T-cell (primary cell): ENCODE measurements at regions of chr2 and their contacts with region 1.

Region 1: DNA sequence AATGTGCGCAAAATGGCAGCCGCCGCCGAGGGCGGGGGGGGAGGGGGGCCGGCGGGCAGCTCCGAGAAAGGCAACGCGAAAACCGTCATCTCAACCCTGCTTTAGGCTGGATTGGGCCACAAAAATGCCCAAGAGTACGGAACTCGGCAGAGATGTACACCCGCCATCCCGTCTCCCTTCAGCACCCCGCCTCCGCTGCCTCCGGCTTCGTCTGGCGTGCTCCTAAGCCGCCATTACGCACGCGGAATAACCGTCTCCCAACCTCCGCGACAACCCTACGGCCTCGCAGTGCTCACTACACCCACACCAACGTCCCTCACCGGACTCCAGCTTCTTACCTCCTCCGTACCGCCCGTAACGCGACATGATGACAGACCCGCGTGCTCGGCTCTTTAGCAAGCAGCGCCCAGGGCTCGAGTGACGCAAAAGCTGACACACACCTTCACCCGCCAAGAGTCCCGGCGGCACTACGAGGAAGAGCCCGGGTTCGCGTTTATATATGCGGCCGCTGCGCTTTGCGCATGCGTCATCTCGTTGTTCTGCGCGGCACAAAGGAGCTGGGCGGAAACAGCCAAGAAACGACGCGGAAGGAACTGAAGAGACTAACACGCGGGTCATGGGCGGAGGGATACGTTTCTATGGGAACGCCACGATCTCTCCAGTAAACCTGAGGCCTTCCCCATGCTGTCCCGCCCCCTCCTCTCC is at the start of gene SRSF7:
- DNase-seq: peak; percentile 94 to 99 (median 97)
- ATAC-seq: peak; percentile 78 to 87 (median 82)
- H3K4me3 ChIP-seq: peak within 1 kb of the TSS; percentile 89 to 95
- H3K4me3 Mint-ChIP-seq: peak within 1 kb of the TSS; percentile 99 to 100 (median 100)
- H3K27ac ChIP-seq: peak within 1 kb of the TSS; percentile 96
- H3K27ac Mint-ChIP-seq: peak within 1 kb of the TSS; percentile 99 to 100
- H3K4me1 ChIP-seq: peaks cover 36 to 46% of the 10 kb centered on the region in 2 experiments
- H3K4me1 Mint-ChIP-seq: peaks cover 52 to 66% (median 62%) of the 10 kb centered on the region in 3 donors
- H3K27me3 ChIP-seq: no peaks in the 10 kb centered on the region
- H3K27me3 Mint-ChIP-seq: peaks cover 0 to 3% of the 10 kb centered on the region in 2 donors
- total RNA-seq, gene SRSF7: 252 to 649 (median 265) TPM

Region 2: GRCh38 chr2:38602732-38603401 is 148.2 kb before region 1 on chr2 and contains the start of gene HNRNPLL:
- CTCF ChIA-PET with region 1: interaction called in 1 of 2 experiments, 4 read pairs
- POLR2A ChIA-PET with region 1: interaction called, 4 to 36 read pairs
- DNase-seq: peak; percentile 81 to 94 (median 89)
- ATAC-seq: peak; percentile 85 to 89 (median 88)
- H3K4me3 ChIP-seq: peak within 1 kb of the TSS; percentile 85 to 86
- H3K4me3 Mint-ChIP-seq: peak within 1 kb of the TSS; percentile 88 to 94 (median 94)
- H3K27ac ChIP-seq: peak within 1 kb of the TSS; percentile 79
- H3K27ac Mint-ChIP-seq: peak within 1 kb of the TSS; percentile 90 to 92
- H3K4me1 ChIP-seq: peaks cover 19 to 22% of the 10 kb centered on the region in 2 experiments
- H3K4me1 Mint-ChIP-seq: peaks cover 45 to 53% (median 49%) of the 10 kb centered on the region in 3 donors
- H3K27me3 ChIP-seq: no peaks in the 10 kb centered on the region
- H3K27me3 Mint-ChIP-seq: no peaks in the 10 kb centered on the region
- total RNA-seq, gene HNRNPLL: 28.1 to 69.0 (median 35.2) TPM

Region 3: GRCh38 chr2:38682008-38682575 is 69.0 kb before region 1 on chr2:
- CTCF ChIA-PET with region 1: no interaction called
- POLR2A ChIA-PET with region 1: interaction called, 6 to 11 read pairs
- DNase-seq: peak in 5 of 35 experiments; percentile 16 to 71 (median 21)
- ATAC-seq: peak; percentile 77 to 86 (median 84)
- H3K4me3 ChIP-seq: peak overlapping the region in 1 of 2 donors; percentile 25
- H3K4me3 Mint-ChIP-seq: peak overlapping the region; percentile 60 to 67 (median 61)
- H3K27ac ChIP-seq: peak overlapping the region; percentile 94
- H3K27ac Mint-ChIP-seq: peak overlapping the region; percentile 89 to 95
- H3K4me1 ChIP-seq: peaks cover 0 to 37% of the 10 kb centered on the region in 2 experiments
- H3K4me1 Mint-ChIP-seq: peaks cover 34 to 64% (median 40%) of the 10 kb centered on the region in 3 donors
- H3K27me3 ChIP-seq: no peaks in the 10 kb centered on the region
- H3K27me3 Mint-ChIP-seq: no peaks in the 10 kb centered on the region

Region 4: DNA sequence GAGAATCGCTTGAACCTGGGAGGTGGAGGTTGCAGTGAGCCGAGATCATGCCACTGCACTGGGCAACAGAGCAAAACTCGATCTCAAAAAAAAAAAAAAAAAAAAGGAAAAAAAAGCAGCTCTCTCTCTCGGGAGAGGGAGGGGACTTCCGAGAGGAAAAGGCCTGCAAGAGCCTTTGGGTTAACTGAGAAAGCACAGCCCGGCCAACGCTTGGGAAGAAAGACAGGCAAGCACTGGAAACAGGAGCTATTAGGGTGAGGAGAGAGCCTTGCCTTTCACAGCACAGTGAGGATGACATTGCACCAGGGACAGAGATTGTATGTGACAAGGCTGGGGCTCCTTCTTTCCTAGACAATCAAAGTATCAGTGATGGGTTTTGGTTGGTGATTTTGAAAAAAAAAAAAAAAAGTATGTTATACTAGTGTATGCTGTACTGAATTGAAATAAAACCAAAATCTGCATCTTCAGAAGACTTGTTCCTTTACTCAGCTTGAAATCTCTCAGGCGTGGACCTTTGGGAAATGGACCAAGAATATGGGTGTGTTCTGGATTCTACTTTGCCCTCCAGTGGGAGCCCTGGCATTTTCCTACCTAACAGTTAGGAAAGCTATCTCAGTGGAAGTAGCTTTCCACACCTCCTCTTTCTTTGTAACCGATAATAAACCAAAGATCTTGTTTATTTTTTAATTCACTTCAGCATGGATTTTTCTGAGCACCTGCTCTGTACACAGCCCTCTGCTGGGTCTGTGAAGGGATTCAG is 16.6 kb before region 1 on chr2:
- CTCF ChIA-PET with region 1: interaction called in 1 of 2 experiments, 6 read pairs
- POLR2A ChIA-PET with region 1: interaction called, 6 to 22 read pairs
- DNase-seq: no peak
- ATAC-seq: peak in 2 of 4 experiments; percentile 5 to 30
- H3K4me3 ChIP-seq: no peak overlapping the region
- H3K4me3 Mint-ChIP-seq: no peak overlapping the region
- H3K27ac ChIP-seq: no peak overlapping the region
- H3K27ac Mint-ChIP-seq: peak overlapping the region; percentile 55
- H3K4me1 ChIP-seq: no peaks in the 10 kb centered on the region
- H3K4me1 Mint-ChIP-seq: peaks cover 5 to 14% (median 14%) of the 10 kb centered on the region in 3 donors
- H3K27me3 ChIP-seq: peaks cover 0 to 3% of the 10 kb centered on the region in 2 experiments
- H3K27me3 Mint-ChIP-seq: no peaks in the 10 kb centered on the region

Region 5: DNA sequence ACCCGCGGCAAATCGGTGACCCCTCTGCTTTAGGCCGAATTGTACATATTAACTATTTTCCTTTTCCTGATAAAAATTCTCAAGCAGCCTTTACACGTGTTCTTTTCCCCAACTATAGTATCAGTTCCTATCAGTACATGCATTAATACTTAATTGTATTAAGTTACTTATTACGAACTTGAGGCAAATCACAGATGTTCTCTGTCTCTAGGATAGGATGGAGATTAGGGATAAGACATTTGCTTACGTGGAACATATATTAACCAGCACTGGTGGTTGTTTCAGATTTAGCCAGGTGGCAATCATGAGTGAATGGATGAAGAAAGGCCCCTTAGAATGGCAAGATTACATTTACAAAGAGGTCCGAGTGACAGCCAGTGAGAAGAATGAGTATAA is 27.6 kb after region 1 on chr2:
- CTCF ChIA-PET with region 1: interaction called in 1 of 2 experiments, 3 read pairs
- POLR2A ChIA-PET with region 1: interaction called, 13 to 41 read pairs
- DNase-seq: no peak
- ATAC-seq: no peak
- H3K4me3 ChIP-seq: peak overlapping the region; percentile 62 to 83
- H3K4me3 Mint-ChIP-seq: peak overlapping the region; percentile 96 to 100 (median 97)
- H3K27ac ChIP-seq: peak overlapping the region; percentile 72
- H3K27ac Mint-ChIP-seq: peak overlapping the region; percentile 93 to 97
- H3K4me1 ChIP-seq: peaks cover 8 to 18% of the 10 kb centered on the region in 2 experiments
- H3K4me1 Mint-ChIP-seq: peaks cover 12 to 17% (median 13%) of the 10 kb centered on the region in 3 donors
- H3K27me3 ChIP-seq: no peaks in the 10 kb centered on the region
- H3K27me3 Mint-ChIP-seq: peaks cover 9 to 15% of the 10 kb centered on the region in 2 donors

Region 6: DNA sequence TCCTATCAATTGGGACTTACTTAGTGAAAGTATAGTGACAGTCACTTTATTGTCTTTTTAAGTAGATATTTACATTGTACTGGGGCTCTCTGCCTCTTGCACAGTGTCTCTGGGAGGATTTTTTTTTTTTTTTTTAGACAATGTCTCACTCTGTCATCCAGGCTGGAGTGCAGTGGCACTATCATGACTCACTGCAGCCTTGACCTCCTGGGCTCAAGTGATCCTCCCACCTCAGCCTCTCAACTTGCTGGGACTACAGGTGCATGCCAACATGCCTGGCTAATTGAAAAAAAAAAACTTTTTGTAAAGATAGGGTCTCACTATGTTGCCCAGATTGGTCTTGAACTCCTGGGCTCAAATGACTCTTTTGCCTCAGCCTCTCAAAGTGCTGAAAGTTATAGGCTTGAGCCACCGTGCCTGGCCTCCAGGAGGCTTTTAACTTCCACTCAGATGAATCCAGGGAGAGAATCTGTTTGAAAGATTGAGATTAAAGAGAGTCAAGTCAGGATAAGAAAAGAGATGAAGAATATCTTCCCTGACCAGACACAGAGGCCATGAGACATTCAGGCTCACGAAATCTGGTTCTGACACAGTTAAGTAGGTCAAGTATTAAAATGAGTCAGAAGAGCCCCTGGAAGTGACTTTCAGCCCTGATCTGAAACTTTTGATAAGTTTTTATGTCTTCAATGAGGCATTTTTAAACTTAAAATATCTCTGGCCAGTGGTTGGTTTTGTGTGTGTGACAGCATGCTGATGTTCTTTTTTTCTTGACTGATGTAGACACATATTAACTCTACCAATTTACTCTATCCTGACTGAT is 156.9 kb after region 1 on chr2:
- CTCF ChIA-PET with region 1: no interaction called
- POLR2A ChIA-PET with region 1: no interaction called
- DNase-seq: no peak
- ATAC-seq: no peak
- H3K4me3 ChIP-seq: no peak overlapping the region
- H3K4me3 Mint-ChIP-seq: no peak overlapping the region
- H3K27ac ChIP-seq: no peak overlapping the region
- H3K27ac Mint-ChIP-seq: no peak overlapping the region
- H3K4me1 ChIP-seq: no peaks in the 10 kb centered on the region
- H3K4me1 Mint-ChIP-seq: peaks cover 0 to 8% (median 0%) of the 10 kb centered on the region in 3 donors
- H3K27me3 ChIP-seq: no peaks in the 10 kb centered on the region
- H3K27me3 Mint-ChIP-seq: no peaks in the 10 kb centered on the region

Region 7: GRCh38 chr2:38925982-38926381 is 174.9 kb after region 1 on chr2:
- CTCF ChIA-PET with region 1: no interaction called
- POLR2A ChIA-PET with region 1: no interaction called
- DNase-seq: no peak
- ATAC-seq: no peak
- H3K4me3 ChIP-seq: no peak overlapping the region
- H3K4me3 Mint-ChIP-seq: no peak overlapping the region
- H3K27ac ChIP-seq: no peak overlapping the region
- H3K27ac Mint-ChIP-seq: no peak overlapping the region
- H3K4me1 ChIP-seq: no peaks in the 10 kb centered on the region
- H3K4me1 Mint-ChIP-seq: no peaks in the 10 kb centered on the region
- H3K27me3 ChIP-seq: no peaks in the 10 kb centered on the region
- H3K27me3 Mint-ChIP-seq: peaks cover 0 to 2% of the 10 kb centered on the region in 2 donors

Region 8: GRCh38 chr2:39033980-39034379 is 282.9 kb after region 1 on chr2:
- CTCF ChIA-PET with region 1: no interaction called
- POLR2A ChIA-PET with region 1: no interaction called
- DNase-seq: no peak
- ATAC-seq: no peak
- H3K4me3 ChIP-seq: no peak overlapping the region
- H3K4me3 Mint-ChIP-seq: no peak overlapping the region
- H3K27ac ChIP-seq: no peak overlapping the region
- H3K27ac Mint-ChIP-seq: no peak overlapping the region
- H3K4me1 ChIP-seq: no peaks in the 10 kb centered on the region
- H3K4me1 Mint-ChIP-seq: peaks cover 0 to 6% (median 0%) of the 10 kb centered on the region in 3 donors
- H3K27me3 ChIP-seq: no peaks in the 10 kb centered on the region
- H3K27me3 Mint-ChIP-seq: no peaks in the 10 kb centered on the region